Activated CD8-positive, alpha-beta T cell treated with anti-CD3 and anti-CD28 coated beads, Interleukin-2, amount 10 ng/mL, durations not matched to agents 7 days and 5 days (primary cell): ENCODE measurements at regions of chr14 and their contacts with region 1.

Region 1: GRCh38 chr14:55026793-55027561 is at the starts of genes SOCS4 and WDHD1:
- DNase-seq: peak; percentile 97
- ATAC-seq: peak; percentile 92
- H3K4me3 Mint-ChIP-seq: peak within 1 kb of the TSS; percentile 96
- H3K27ac Mint-ChIP-seq: peak within 1 kb of the TSS; percentile 96
- H3K4me1 Mint-ChIP-seq: peaks cover 49% of the 10 kb centered on the region
- H3K27me3 Mint-ChIP-seq: no peaks in the 10 kb centered on the region
- total RNA-seq, gene SOCS4: 26.7 to 36.5 TPM
- total RNA-seq, gene WDHD1: 45.9 to 46.6 TPM

Region 2: GRCh38 chr14:55038708-55039107 is 11.7 kb after region 1 on chr14:
- CTCF ChIA-PET with region 1: interaction called, 5 read pairs
- POLR2A ChIA-PET with region 1: interaction called, 16 read pairs
- DNase-seq: no peak
- ATAC-seq: no peak
- H3K4me3 Mint-ChIP-seq: no peak overlapping the region
- H3K27ac Mint-ChIP-seq: no peak overlapping the region
- H3K4me1 Mint-ChIP-seq: no peaks in the 10 kb centered on the region
- H3K27me3 Mint-ChIP-seq: no peaks in the 10 kb centered on the region

Region 3: GRCh38 chr14:55045087-55045486 is 18.1 kb after region 1 on chr14:
- CTCF ChIA-PET with region 1: interaction called, 4 read pairs
- POLR2A ChIA-PET with region 1: interaction called, 27 read pairs
- DNase-seq: no peak
- ATAC-seq: no peak
- H3K4me3 Mint-ChIP-seq: no peak overlapping the region
- H3K27ac Mint-ChIP-seq: no peak overlapping the region
- H3K4me1 Mint-ChIP-seq: peaks cover 3% of the 10 kb centered on the region
- H3K27me3 Mint-ChIP-seq: no peaks in the 10 kb centered on the region

Region 4: DNA sequence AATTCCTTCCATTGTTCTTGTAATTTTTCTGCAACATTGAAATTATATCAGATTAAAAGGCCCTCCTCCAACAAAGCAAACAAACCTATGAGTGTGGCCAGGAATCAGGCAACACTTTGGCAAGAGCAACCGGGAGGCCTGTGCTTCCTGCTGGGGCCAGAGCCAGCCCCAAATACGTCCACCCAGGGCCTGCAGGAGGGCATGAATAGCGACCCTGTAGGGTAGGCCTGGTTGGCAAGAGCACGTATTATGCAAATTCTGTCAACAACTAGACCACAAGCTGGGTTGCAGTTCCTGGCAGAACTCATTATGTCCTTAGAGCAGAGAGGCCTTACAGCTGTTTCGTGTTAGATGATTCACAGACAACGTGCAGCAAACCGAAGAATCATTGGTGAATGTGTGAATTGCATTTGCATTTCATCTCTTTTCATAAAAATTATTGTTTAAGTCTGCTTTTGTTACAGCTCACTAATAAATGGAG is 75.2 kb after region 1 on chr14:
- CTCF ChIA-PET with region 1: no interaction called
- POLR2A ChIA-PET with region 1: interaction called, 10 read pairs
- DNase-seq: peak; percentile 76
- ATAC-seq: peak; percentile 62
- H3K4me3 Mint-ChIP-seq: peak overlapping the region; percentile 68
- H3K27ac Mint-ChIP-seq: peak overlapping the region; percentile 98
- H3K4me1 Mint-ChIP-seq: peaks cover 70% of the 10 kb centered on the region
- H3K27me3 Mint-ChIP-seq: no peaks in the 10 kb centered on the region

Region 5: DNA sequence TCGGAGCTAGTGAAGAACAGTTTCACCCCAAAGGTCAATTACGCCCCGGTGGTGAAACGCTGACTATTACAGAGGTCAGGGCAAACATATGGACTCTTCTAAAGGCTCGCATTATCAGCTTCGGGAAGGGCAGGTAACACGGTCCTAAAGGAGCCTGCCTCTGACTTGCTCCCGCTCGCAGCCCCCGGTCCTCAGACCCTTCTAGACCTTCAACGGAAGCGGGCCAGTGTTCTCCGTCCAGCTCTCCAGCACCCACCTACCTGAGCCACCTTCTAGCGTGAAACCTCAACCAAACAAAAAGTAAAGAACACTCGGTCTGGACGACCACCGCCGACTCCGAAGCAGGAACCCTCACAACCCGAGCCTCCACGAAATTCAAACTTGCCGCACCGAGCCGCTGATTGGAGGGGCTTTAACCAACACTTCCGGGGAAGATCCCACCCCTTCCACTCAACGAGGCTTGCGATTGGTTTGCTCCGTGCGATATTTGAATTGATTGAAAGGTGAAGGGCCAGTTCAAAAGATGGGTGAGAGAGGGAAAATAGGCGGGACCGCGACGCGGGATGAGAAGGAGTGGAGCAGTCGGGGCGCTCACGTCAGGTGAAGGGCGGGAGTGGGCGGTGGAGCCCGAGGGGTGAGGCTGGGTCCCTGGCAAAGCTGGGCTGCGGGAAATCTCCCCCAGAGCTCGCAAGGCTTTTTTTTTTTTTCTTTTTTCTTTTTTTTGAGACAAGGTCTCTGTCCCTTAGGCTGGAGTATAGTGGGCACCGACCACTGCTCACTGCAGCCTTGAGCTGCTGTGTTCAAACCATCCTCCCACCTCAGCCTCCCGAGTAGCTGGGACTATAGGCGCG is 164.5 kb after region 1 on chr14 and contains the start of gene DLGAP5:
- CTCF ChIA-PET with region 1: no interaction called
- POLR2A ChIA-PET with region 1: interaction called, 12 read pairs
- DNase-seq: peak; percentile 97
- ATAC-seq: peak; percentile 99
- H3K4me3 Mint-ChIP-seq: peak within 1 kb of the TSS; percentile 98
- H3K27ac Mint-ChIP-seq: peak within 1 kb of the TSS; percentile 97
- H3K4me1 Mint-ChIP-seq: peaks cover 36% of the 10 kb centered on the region
- H3K27me3 Mint-ChIP-seq: peaks cover 4% of the 10 kb centered on the region
- total RNA-seq, gene DLGAP5: 110 to 112 TPM

Region 6: GRCh38 chr14:55221186-55221585 is 194.2 kb after region 1 on chr14:
- CTCF ChIA-PET with region 1: no interaction called
- POLR2A ChIA-PET with region 1: no interaction called
- DNase-seq: no peak
- ATAC-seq: no peak
- H3K4me3 Mint-ChIP-seq: no peak overlapping the region
- H3K27ac Mint-ChIP-seq: no peak overlapping the region
- H3K4me1 Mint-ChIP-seq: no peaks in the 10 kb centered on the region
- H3K27me3 Mint-ChIP-seq: peaks cover 18% of the 10 kb centered on the region

Region 7: DNA sequence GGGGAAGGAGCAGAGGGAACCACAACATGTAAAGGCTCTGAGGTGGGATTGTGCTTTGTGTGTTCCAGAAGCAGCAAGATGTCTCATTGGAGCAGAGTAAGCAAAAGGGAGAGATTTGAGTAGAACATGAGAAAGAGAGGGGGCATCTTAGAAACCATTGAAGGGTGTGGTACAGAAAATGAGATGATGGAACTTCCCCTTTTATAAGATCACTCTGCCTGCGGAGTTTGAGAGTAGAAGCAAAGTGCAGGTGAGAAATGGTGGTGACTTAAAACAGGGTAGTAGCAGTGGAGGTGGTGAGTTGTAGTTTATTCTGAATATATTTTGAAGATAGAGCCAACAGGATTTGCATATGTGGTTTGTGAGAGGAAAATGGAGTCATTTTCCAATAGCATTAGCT is 300.2 kb after region 1 on chr14:
- CTCF ChIA-PET with region 1: no interaction called
- POLR2A ChIA-PET with region 1: no interaction called
- DNase-seq: no peak
- ATAC-seq: no peak
- H3K4me3 Mint-ChIP-seq: no peak overlapping the region
- H3K27ac Mint-ChIP-seq: no peak overlapping the region
- H3K4me1 Mint-ChIP-seq: peaks cover 20% of the 10 kb centered on the region
- H3K27me3 Mint-ChIP-seq: no peaks in the 10 kb centered on the region